MCF 10A (cell line): ENCODE measurements at regions of chr2 and their contacts with region 1.

Region 1: GRCh38 chr2:15591692-15592463 is at the start of gene DDX1:
- DNase-seq: peak; percentile 84
- H3K4me3 Mint-ChIP-seq: peak within 1 kb of the TSS; percentile 93
- H3K27ac Mint-ChIP-seq: peak within 1 kb of the TSS; percentile 99
- H3K4me1 Mint-ChIP-seq: peaks cover 11% of the 10 kb centered on the region
- H3K27me3 Mint-ChIP-seq: no peaks in the 10 kb centered on the region
- CTCF ChIP-seq: no peak
- total RNA-seq, gene DDX1: 97.8 and 119 TPM in 2 replicates

Region 2: DNA sequence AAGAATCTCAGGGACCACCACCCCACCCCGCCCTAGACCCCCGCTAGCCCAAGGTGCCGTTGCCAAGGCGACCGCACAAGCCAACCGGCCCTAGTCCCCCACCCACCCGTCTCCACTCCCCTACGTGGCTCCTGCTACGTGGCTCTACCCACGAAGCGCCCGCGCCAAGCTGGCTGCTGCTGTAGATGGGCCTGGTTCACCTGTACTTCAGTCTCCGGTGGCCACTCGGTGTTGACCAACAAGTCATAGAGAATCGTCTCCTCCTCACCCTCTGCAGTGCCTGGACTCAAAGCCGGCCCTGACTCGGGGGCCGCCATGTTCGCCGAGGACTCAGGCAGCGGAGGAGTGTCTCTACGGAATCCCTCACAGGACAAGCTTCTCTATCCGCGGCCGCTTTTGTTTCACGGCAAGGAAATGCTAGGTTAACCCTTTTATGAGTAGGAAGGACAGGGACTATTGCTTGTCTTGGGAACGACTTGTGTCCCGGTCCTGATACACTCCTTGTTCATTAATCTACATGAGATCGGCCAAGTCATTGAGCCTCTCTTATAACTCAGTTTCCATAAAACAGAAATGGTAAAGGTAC is 30.8 kb before region 1 on chr2 and contains the start of gene NBAS:
- CTCF ChIA-PET with region 1: interaction called, 6 read pairs
- POLR2A ChIA-PET with region 1: interaction called, 13 read pairs
- intact Hi-C with region 1: loop called (anchors 2 kb)
- DNase-seq: peak; percentile 90
- H3K4me3 Mint-ChIP-seq: peak within 1 kb of the TSS; percentile 98
- H3K27ac Mint-ChIP-seq: peak within 1 kb of the TSS; percentile 94
- H3K4me1 Mint-ChIP-seq: peaks cover 24% of the 10 kb centered on the region
- H3K27me3 Mint-ChIP-seq: no peaks in the 10 kb centered on the region
- CTCF ChIP-seq: no peak
- total RNA-seq, gene NBAS: 46.4 and 55.6 TPM in 2 replicates

Region 3: GRCh38 chr2:15571729-15572128 is 20.1 kb before region 1 on chr2:
- CTCF ChIA-PET with region 1: interaction called, 67 read pairs
- POLR2A ChIA-PET with region 1: interaction called, 4 read pairs
- intact Hi-C with region 1: no loop called
- DNase-seq: no peak
- H3K4me3 Mint-ChIP-seq: no peak overlapping the region
- H3K27ac Mint-ChIP-seq: no peak overlapping the region
- H3K4me1 Mint-ChIP-seq: no peaks in the 10 kb centered on the region
- H3K27me3 Mint-ChIP-seq: no peaks in the 10 kb centered on the region
- CTCF ChIP-seq: no peak

Region 4: DNA sequence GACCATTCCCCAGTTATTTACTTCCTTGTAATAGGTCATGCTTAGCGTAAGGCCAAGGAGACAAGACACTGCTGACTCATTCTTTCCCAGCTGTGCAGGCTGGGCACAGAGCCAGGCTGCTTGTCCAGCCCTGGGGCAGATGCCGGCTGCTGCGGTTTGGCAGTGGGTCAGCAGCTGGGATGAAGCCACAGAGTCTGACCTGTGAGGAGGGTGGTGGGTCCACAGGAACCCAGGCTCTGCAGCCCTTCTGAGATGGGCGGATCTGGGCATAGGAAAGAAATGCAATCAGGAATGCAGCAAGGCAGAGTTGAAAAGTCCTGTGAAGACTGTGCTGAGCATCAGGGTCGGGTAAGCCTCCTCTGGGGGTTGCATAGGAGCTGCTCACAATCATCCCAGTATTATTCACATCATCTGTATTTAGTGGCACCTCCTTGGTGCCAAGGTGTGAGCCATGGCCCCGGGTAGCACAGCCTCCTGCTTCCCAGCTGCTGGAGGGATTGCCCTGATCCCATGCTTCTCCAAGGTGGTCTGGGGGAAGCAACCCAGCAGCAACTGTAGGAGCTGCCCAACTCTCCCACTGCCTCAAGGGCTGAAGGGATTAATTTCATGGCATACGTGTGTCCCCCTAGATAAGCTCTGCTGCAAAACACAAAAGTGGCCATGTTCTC is 138.8 kb after region 1 on chr2:
- CTCF ChIA-PET with region 1: no interaction called
- POLR2A ChIA-PET with region 1: no interaction called
- intact Hi-C with region 1: no loop called
- DNase-seq: peak; percentile 97
- H3K4me3 Mint-ChIP-seq: no peak overlapping the region
- H3K27ac Mint-ChIP-seq: no peak overlapping the region
- H3K4me1 Mint-ChIP-seq: peaks cover 29% of the 10 kb centered on the region
- H3K27me3 Mint-ChIP-seq: peaks cover 99% of the 10 kb centered on the region
- CTCF ChIP-seq: no peak